ENCODE measurements at regions of chr12 and their contacts with region 1.

Region 1: GRCh38 chr12:12032851-12033588 is 37.7 kb upstream of the BCL2L14 start:
- DNase-seq: peak; percentile 42 to 68 (median 60)
- H3K4me3 ChIP-seq: peak overlapping the region; percentile 44 to 85 (median 49)
- H3K4me3 Mint-ChIP-seq: peak overlapping the region; percentile 85 to 94
- H3K27ac ChIP-seq: peak overlapping the region in 1 of 2 donors; percentile 76
- H3K27ac Mint-ChIP-seq: peak overlapping the region; percentile 28 to 88 (median 80)
- H3K4me1 ChIP-seq: peaks cover 16 to 20% of the 10 kb centered on the region in 2 donors
- H3K4me1 Mint-ChIP-seq: peaks cover 33% of the 10 kb centered on the region
- H3K27me3 ChIP-seq: no peaks in the 10 kb centered on the region
- H3K27me3 Mint-ChIP-seq: peaks cover 0 to 5% (median 0%) of the 10 kb centered on the region in 3 donors
- CTCF ChIP-seq: peak; percentile 91

Region 2: GRCh38 chr12:11553871-11554533 is 479.0 kb before region 1 on chr12:
- intact Hi-C with region 1: loop called in 1 of 2 experiments (anchors 10 kb)
- DNase-seq: peak; percentile 38 to 65 (median 55)
- H3K4me3 ChIP-seq: no peak overlapping the region
- H3K4me3 Mint-ChIP-seq: no peak overlapping the region
- H3K27ac ChIP-seq: no peak overlapping the region
- H3K27ac Mint-ChIP-seq: no peak overlapping the region
- H3K4me1 ChIP-seq: no peaks in the 10 kb centered on the region
- H3K4me1 Mint-ChIP-seq: peaks cover 14% of the 10 kb centered on the region
- H3K27me3 ChIP-seq: no peaks in the 10 kb centered on the region
- H3K27me3 Mint-ChIP-seq: peaks cover 0 to 2% (median 2%) of the 10 kb centered on the region in 3 donors
- CTCF ChIP-seq: peak; percentile 78

Region 3: GRCh38 chr12:11581179-11581755 is 451.8 kb before region 1 on chr12:
- intact Hi-C with region 1: loop called (anchors 1 to 5 kb)
- DNase-seq: peak; percentile 59 to 79 (median 72)
- H3K4me3 ChIP-seq: no peak overlapping the region
- H3K4me3 Mint-ChIP-seq: no peak overlapping the region
- H3K27ac ChIP-seq: no peak overlapping the region
- H3K27ac Mint-ChIP-seq: peak overlapping the region in 2 of 7 donors; percentile 30 to 35
- H3K4me1 ChIP-seq: peaks cover 43 to 55% of the 10 kb centered on the region in 2 donors
- H3K4me1 Mint-ChIP-seq: peaks cover 53% of the 10 kb centered on the region
- H3K27me3 ChIP-seq: no peaks in the 10 kb centered on the region
- H3K27me3 Mint-ChIP-seq: peaks cover 0 to 1% (median 1%) of the 10 kb centered on the region in 3 donors
- CTCF ChIP-seq: peak; percentile 84

Region 4: DNA sequence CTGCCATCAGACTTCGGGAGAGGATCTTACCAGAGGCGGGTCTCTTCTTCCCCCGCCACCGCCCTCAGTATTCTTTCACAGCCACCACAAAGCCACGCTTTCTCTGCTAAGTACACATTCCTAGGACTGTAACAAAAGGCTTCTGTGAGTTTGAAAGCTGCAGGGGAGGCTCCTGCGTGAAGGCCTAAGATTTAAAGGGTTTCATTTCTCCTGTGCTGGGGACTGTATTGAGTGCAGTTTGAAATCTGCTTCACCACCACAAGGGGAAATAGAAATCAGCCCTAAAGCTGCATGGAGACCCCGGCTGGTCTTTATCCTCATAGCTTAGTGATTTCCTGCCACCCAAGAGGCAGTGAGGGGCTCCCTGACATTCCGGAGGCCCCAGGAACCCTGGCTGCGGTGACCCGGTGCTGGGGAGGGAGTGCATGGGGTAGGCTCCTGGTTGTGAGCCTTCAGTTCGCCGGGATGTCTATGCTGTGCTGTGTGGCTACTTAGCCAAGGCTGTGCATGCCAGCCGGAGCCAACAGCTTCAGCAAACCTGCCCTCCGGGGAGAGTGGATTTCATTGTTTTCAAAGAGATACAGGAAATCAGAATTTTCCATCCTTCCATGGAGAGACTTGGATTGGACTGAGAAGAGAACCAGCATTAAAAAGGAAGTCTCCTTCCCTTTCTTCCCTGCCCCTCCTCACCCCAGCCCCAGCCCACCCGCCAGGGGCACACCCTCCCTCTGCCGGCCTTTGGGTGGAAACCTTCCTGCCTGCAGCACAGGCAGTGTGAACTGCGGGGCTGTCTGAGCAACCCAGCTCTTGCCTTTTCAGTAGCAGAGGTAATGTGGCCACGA is 220.2 kb before region 1 on chr12:
- intact Hi-C with region 1: loop called in 1 of 2 experiments (anchors 10 kb)
- DNase-seq: peak; percentile 43 to 54 (median 52)
- H3K4me3 ChIP-seq: peak overlapping the region; percentile 1 to 62 (median 27)
- H3K4me3 Mint-ChIP-seq: peak overlapping the region; percentile 65 to 81
- H3K27ac ChIP-seq: peak overlapping the region; percentile 86 to 99
- H3K27ac Mint-ChIP-seq: peak overlapping the region; percentile 83 to 95 (median 92)
- H3K4me1 ChIP-seq: peaks cover 63 to 71% of the 10 kb centered on the region in 2 donors
- H3K4me1 Mint-ChIP-seq: peaks cover 71% of the 10 kb centered on the region
- H3K27me3 ChIP-seq: no peaks in the 10 kb centered on the region
- H3K27me3 Mint-ChIP-seq: peaks cover 0 to 1% (median 0%) of the 10 kb centered on the region in 3 donors
- CTCF ChIP-seq: peak; percentile 48

Region 5: DNA sequence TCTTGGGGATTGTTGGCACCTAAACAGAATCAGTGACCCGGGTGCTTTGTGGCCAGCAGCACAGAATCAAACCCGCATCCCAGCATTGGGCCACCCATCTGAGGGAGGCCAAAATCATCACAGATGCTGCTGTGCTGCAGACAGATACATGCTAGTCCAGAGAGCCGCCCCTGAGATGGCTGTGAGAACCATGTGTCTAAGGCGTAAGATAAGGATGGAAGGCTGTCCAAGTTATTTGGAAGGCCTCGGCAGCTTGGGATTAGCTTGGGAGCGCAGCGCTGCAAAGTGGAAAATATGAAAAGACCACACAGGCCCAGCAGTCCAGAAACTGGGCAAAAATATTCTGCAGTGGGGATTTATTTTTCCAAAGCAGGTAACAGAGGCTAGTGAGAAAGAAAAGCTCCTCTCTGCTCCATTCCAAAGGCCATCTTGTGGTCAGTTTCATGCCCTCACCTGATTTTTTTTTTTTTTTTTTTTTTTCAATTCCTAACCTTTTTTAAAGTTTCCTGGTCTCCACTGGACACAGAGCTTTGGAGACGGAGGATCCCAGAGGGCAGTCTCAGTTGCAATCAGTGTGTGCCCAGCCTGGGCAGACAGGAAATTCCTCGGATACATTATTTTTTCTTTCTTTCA is 141.2 kb before region 1 on chr12:
- intact Hi-C with region 1: loop called (anchors 10 kb)
- DNase-seq: no peak
- H3K4me3 ChIP-seq: no peak overlapping the region
- H3K4me3 Mint-ChIP-seq: peak overlapping the region in 1 of 2 donors; percentile 40
- H3K27ac ChIP-seq: peak overlapping the region; percentile 27 to 46
- H3K27ac Mint-ChIP-seq: peak overlapping the region; percentile 47 to 89 (median 80)
- H3K4me1 ChIP-seq: peaks cover 28 to 31% of the 10 kb centered on the region in 2 donors
- H3K4me1 Mint-ChIP-seq: peaks cover 37% of the 10 kb centered on the region
- H3K27me3 ChIP-seq: no peaks in the 10 kb centered on the region
- H3K27me3 Mint-ChIP-seq: no peaks in the 10 kb centered on the region
- CTCF ChIP-seq: no peak

Region 6: GRCh38 chr12:11991604-11992003 is 41.4 kb before region 1 on chr12:
- intact Hi-C with region 1: no loop called
- DNase-seq: no peak
- H3K4me3 ChIP-seq: no peak overlapping the region
- H3K4me3 Mint-ChIP-seq: no peak overlapping the region
- H3K27ac ChIP-seq: no peak overlapping the region
- H3K27ac Mint-ChIP-seq: no peak overlapping the region
- H3K4me1 ChIP-seq: no peaks in the 10 kb centered on the region
- H3K4me1 Mint-ChIP-seq: peaks cover 1% of the 10 kb centered on the region
- H3K27me3 ChIP-seq: no peaks in the 10 kb centered on the region
- H3K27me3 Mint-ChIP-seq: peaks cover 0 to 2% (median 0%) of the 10 kb centered on the region in 3 donors
- CTCF ChIP-seq: no peak

Measured in CD14-positive monocyte (primary cell).